MCF 10A (cell line): ENCODE measurements at regions of chr20 and their contacts with region 1.

Region 1: GRCh38 chr20:34111702-34112599 is at the start of gene EIF2S2:
- DNase-seq: peak; percentile 98
- H3K4me3 Mint-ChIP-seq: peak within 1 kb of the TSS; percentile 91
- H3K27ac Mint-ChIP-seq: peak within 1 kb of the TSS; percentile 98
- H3K4me1 Mint-ChIP-seq: peaks cover 34% of the 10 kb centered on the region
- H3K27me3 Mint-ChIP-seq: no peaks in the 10 kb centered on the region
- CTCF ChIP-seq: no peak
- total RNA-seq, gene EIF2S2: 151 and 191 TPM in 2 replicates

Region 2: GRCh38 chr20:33489495-33490022 is 622.4 kb before region 1 on chr20:
- CTCF ChIA-PET with region 1: no interaction called
- POLR2A ChIA-PET with region 1: interaction called, 16 read pairs
- intact Hi-C with region 1: no loop called
- DNase-seq: peak; percentile 96
- H3K4me3 Mint-ChIP-seq: peak overlapping the region; percentile 83
- H3K27ac Mint-ChIP-seq: peak overlapping the region; percentile 75
- H3K4me1 Mint-ChIP-seq: no peaks in the 10 kb centered on the region
- H3K27me3 Mint-ChIP-seq: no peaks in the 10 kb centered on the region
- CTCF ChIP-seq: no peak

Region 3: DNA sequence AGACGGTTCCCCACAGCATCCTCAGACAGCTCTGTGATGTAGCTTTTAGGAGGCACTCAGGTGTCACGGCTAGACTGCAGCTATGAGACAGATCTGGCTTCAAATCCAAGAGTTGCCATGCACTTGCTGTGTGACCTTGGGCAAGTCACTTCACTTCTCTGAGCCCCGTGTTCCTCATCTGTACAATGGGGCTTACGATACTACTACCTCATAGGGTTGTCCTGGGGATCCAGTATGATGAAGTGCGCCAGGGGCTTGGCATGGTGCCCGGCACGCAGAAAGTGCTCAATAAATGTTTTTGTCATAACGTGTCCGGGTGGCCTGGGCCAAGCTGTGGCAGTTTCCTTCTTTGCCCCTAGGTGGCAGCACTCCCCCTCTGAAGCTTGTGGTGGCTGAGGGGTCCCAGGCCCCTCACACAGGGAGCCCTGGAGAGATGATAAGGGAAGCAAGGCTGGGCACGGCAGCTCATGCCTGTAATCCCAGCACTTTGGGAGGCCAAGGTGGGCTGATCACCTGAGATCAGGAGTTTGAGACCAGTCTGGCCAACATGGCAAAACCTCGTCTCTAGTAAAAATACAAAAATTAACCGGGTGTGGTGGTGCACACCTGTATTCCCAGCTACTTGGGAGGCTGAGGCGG is 319.9 kb before region 1 on chr20:
- CTCF ChIA-PET with region 1: interaction called, 5 read pairs
- POLR2A ChIA-PET with region 1: interaction called, 19 read pairs
- intact Hi-C with region 1: no loop called
- DNase-seq: peak; percentile 48
- H3K4me3 Mint-ChIP-seq: no peak overlapping the region
- H3K27ac Mint-ChIP-seq: no peak overlapping the region
- H3K4me1 Mint-ChIP-seq: peaks cover 24% of the 10 kb centered on the region
- H3K27me3 Mint-ChIP-seq: no peaks in the 10 kb centered on the region
- CTCF ChIP-seq: peak; percentile 87

Region 4: DNA sequence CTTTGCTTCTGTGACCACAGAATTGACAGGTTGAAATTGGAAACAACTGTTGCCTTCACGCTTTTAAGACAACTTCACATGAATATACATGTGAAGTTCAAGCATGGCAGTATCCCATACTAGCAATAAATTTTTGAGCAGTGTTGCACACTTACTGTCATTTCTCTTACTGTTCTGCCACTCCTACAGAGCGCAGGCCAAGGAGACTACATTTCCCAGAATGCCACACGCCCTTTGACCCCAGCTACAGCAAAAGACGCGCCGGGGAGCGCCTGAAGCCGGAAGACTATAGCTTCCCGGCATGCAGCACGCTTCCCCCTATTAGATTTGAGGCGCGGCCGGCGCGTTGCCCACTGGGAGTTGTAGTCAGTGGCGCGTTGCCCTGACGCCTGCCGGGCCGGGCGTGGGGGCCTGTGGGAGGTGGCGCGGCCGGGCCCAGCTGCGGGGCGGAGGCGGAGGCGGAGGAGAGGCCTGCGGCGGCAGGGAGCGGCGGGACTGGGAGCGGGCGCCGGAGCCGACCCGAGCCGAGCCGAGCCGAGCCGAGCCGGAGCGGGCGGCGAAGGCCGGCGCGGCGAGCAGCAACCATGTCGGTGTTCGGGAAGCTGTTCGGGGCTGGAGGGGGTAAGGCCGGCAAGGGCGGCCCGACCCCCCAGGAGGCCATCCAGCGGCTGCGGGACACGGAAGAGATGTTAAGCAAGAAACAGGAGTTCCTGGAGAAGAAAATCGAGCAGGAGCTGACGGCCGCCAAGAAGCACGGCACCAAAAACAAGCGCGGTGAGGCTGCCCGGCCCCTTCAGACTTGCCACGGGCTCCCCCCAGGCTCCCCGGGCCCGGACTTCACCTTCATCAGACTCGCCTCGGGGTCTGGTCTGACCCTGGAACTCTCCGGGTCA is 300.8 kb before region 1 on chr20 and contains the start of gene CHMP4B:
- CTCF ChIA-PET with region 1: interaction called, 3 read pairs
- POLR2A ChIA-PET with region 1: interaction called, 51 read pairs
- intact Hi-C with region 1: no loop called
- DNase-seq: peak; percentile 99
- H3K4me3 Mint-ChIP-seq: peak within 1 kb of the TSS; percentile 93
- H3K27ac Mint-ChIP-seq: peak within 1 kb of the TSS; percentile 100
- H3K4me1 Mint-ChIP-seq: peaks cover 19% of the 10 kb centered on the region
- H3K27me3 Mint-ChIP-seq: no peaks in the 10 kb centered on the region
- CTCF ChIP-seq: no peak
- total RNA-seq, gene CHMP4B: 77.6 and 95.2 TPM in 2 replicates

Region 5: GRCh38 chr20:34069341-34070078 is 42.4 kb before region 1 on chr20:
- CTCF ChIA-PET with region 1: interaction called, 15 read pairs
- POLR2A ChIA-PET with region 1: interaction called, 11 read pairs
- intact Hi-C with region 1: no loop called
- DNase-seq: peak; percentile 85
- H3K4me3 Mint-ChIP-seq: no peak overlapping the region
- H3K27ac Mint-ChIP-seq: no peak overlapping the region
- H3K4me1 Mint-ChIP-seq: peaks cover 21% of the 10 kb centered on the region
- H3K27me3 Mint-ChIP-seq: no peaks in the 10 kb centered on the region
- CTCF ChIP-seq: peak; percentile 88

Region 6: DNA sequence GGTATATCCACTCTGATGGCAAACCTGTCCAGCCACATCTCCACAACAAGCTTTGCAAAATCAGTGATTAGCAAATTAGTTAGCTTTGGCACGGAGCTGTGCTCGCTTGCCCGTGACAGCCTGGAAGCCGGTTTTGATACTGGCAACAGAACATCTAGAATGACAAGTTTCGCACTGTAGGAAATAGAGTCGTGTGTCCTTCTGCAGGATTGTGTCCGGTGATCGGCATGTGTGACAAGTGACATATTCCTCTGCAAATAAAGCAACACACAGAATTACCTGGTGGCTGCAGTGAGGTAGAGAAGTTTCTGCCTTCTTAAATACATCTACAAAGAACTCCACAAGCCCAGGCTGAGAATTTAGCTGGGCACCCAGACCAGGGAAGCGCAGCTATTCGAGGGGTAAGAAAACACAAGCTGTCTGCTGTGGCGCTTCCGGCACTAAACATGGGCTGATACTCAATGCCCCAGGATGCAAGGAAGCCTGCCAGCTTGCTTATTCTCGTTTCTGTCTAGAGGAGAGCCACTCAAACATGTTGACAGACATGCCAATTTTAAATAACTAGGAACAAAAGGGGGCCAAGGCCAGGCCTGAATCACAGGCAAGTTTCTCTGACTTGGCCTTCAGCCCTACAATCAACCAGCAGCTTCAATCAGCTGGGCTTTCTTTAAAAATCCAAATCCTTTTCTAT is 22.2 kb before region 1 on chr20:
- CTCF ChIA-PET with region 1: interaction called, 4 read pairs
- POLR2A ChIA-PET with region 1: interaction called, 47 read pairs
- intact Hi-C with region 1: no loop called
- DNase-seq: no peak
- H3K4me3 Mint-ChIP-seq: no peak overlapping the region
- H3K27ac Mint-ChIP-seq: no peak overlapping the region
- H3K4me1 Mint-ChIP-seq: no peaks in the 10 kb centered on the region
- H3K27me3 Mint-ChIP-seq: no peaks in the 10 kb centered on the region
- CTCF ChIP-seq: no peak

Region 7: GRCh38 chr20:34129518-34130162 is 17.7 kb after region 1 on chr20:
- CTCF ChIA-PET with region 1: interaction called, 11 read pairs
- POLR2A ChIA-PET with region 1: interaction called, 14 read pairs
- intact Hi-C with region 1: no loop called
- DNase-seq: peak; percentile 79
- H3K4me3 Mint-ChIP-seq: peak overlapping the region; percentile 17
- H3K27ac Mint-ChIP-seq: no peak overlapping the region
- H3K4me1 Mint-ChIP-seq: no peaks in the 10 kb centered on the region
- H3K27me3 Mint-ChIP-seq: peaks cover 23% of the 10 kb centered on the region
- CTCF ChIP-seq: peak; percentile 73